Head of caudate nucleus (tissue), 42 donors: ENCODE measurements at regions of chr19 and their contacts with region 1.

Region 1: GRCh38 chr19:12666265-12667048 is at the starts of genes MAN2B1 and WDR83:
- DNase-seq: peak; percentile 15 to 88 (median 76)

Region 2: GRCh38 chr19:12564016-12564664 is 102.3 kb before region 1 on chr19:
- intact Hi-C with region 1: loop called (anchors 10 kb)
- DNase-seq: peak; percentile 64 to 98 (median 94)